ENCODE measurements at regions of chrX and their contacts with region 1.

Region 1: DNA sequence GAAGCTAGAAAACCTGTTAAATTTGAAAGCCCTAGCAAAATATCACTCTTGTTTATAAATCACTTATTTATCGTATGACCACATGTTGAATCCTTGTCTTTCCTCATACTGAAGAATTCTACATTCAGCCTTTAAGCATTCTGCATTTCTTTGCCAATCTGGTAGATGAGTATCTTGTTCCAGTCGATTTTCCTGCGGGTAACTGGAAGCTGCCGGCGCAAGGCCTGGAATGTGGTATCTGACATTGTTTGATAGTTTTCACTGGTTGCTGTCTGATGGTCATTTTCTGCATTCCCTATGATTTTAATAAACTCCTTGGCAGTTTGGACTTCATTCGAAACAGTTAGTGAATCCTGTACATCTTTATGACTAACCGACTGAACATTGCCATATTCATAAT is 13.7 kb upstream of the PHKA1 start:
- DNase-seq: no peak
- ATAC-seq: no peak
- H3K4me3 Mint-ChIP-seq: no peak overlapping the region
- H3K27ac Mint-ChIP-seq: no peak overlapping the region
- H3K4me1 Mint-ChIP-seq: no peaks in the 10 kb centered on the region
- H3K27me3 Mint-ChIP-seq: peaks cover 13% of the 10 kb centered on the region

Region 2: DNA sequence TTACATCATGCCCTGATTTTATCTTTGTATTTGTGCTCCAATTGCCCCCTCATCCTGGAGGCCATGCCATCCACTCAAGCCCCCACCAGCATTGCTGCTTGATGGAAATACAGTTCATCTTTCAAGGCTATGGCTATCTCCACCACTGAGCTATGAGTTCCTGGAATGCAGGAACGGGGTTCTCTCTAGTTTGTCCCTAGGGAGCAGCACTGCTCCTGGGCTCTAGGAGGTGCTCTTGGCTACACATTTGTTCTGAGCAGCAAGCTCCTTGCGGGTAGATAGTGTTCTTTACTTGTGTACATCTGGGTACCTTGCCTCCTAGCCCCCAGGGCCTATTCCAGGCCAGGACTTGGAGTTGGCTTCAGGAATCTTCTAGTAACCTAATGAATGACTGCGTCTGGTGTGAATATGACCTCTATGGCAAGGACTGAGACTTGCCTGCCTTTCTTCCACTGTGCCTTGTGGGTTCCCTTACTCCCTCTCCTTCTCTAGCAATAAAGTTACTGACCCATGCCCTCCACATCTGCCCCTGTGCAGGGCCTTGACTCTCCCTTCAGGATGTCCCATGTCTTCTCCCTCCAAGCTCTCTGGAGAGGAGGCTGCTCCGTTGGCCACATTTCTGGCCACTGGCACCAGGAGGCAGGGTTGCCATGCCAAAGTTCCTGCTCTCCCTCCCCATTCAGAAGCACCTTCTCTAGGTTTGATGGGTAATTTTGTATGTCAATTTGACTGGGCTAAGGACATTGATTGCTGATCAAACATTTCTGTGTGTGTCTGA is 429.7 kb before region 1 on chrX:
- CTCF ChIA-PET with region 1: no interaction called
- POLR2A ChIA-PET with region 1: no interaction called
- intact Hi-C with region 1: loop called in 1 of 2 experiments (anchors 5 kb)
- DNase-seq: peak; percentile 40
- ATAC-seq: peak; percentile 75
- H3K4me3 Mint-ChIP-seq: no peak overlapping the region
- H3K27ac Mint-ChIP-seq: no peak overlapping the region
- H3K4me1 Mint-ChIP-seq: no peaks in the 10 kb centered on the region
- H3K27me3 Mint-ChIP-seq: peaks cover 34% of the 10 kb centered on the region

Measured in activated CD4-positive, alpha-beta T cell treated with anti-CD3 and anti-CD28 coated beads for 36 hours (primary cell).